Panc1 (cell line): ENCODE measurements at regions of chr10 and their contacts with region 1.

Region 1: GRCh38 chr10:3873728-3874461 is 88.9 kb upstream of the KLF6 start:
- DNase-seq: no peak
- ATAC-seq: no peak
- H3K4me3 ChIP-seq: no peak overlapping the region
- H3K27ac ChIP-seq: peak overlapping the region; percentile 76
- H3K4me1 ChIP-seq: peaks cover 42% of the 10 kb centered on the region
- H3K27me3 ChIP-seq: no peaks in the 10 kb centered on the region
- CTCF ChIP-seq: no peak

Region 2: GRCh38 chr10:3162533-3162932 is 711.4 kb before region 1 on chr10:
- CTCF ChIA-PET with region 1: no interaction called
- POLR2A ChIA-PET with region 1: interaction called, 17 read pairs
- in situ Hi-C with region 1: no loop called
- intact Hi-C with region 1: no loop called
- DNase-seq: no peak
- ATAC-seq: no peak
- H3K4me3 ChIP-seq: no peak overlapping the region
- H3K27ac ChIP-seq: no peak overlapping the region
- H3K4me1 ChIP-seq: no peaks in the 10 kb centered on the region
- H3K27me3 ChIP-seq: no peaks in the 10 kb centered on the region
- CTCF ChIP-seq: peak; percentile 39; the same call in 1 of the 2 replicates

Region 3: GRCh38 chr10:3538658-3539531 is 335.0 kb before region 1 on chr10:
- CTCF ChIA-PET with region 1: no interaction called
- POLR2A ChIA-PET with region 1: no interaction called
- in situ Hi-C with region 1: no loop called
- intact Hi-C with region 1: no loop called
- DNase-seq: no peak
- ATAC-seq: peak; percentile 62; the same call in 1 of the 2 replicates
- H3K4me3 ChIP-seq: no peak overlapping the region
- H3K27ac ChIP-seq: no peak overlapping the region
- H3K4me1 ChIP-seq: no peaks in the 10 kb centered on the region; the same call in 1 of the 2 replicates
- H3K27me3 ChIP-seq: no peaks in the 10 kb centered on the region
- CTCF ChIP-seq: no peak

Region 4: DNA sequence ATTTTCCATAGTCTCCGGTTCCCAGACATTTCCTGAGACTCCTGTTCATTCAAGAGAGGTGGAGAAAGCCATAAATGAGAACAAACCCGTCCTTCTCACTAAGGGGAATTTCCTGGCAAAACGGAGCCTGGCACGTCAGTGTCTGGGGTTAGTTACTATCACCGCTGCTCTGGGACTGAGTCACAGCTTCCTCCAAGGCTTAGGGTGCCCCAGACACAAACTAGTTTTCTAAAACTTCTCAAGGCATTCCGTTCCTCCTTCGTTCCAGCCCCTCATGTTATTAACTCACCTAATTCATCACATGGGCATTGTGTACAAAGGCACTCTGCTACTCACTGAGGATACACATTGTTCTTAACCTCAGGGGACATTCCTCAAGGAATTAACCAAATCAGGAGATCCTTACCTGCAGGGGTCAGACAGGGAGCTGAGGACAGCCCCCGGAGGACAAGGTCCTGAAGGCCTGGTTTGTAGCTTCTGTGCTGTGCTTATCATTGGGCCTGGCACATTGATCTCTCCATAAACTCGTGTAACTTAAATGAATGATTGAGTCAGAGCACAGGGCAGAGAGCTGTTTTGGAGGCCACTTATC is 14.1 kb after region 1 on chr10:
- CTCF ChIA-PET with region 1: no interaction called
- POLR2A ChIA-PET with region 1: interaction called, 17 read pairs
- in situ Hi-C with region 1: no loop called
- intact Hi-C with region 1: no loop called
- DNase-seq: no peak
- ATAC-seq: peak; percentile 68
- H3K4me3 ChIP-seq: no peak overlapping the region
- H3K27ac ChIP-seq: peak overlapping the region; percentile 100
- H3K4me1 ChIP-seq: peaks cover 55% of the 10 kb centered on the region
- H3K27me3 ChIP-seq: no peaks in the 10 kb centered on the region
- CTCF ChIP-seq: no peak

Region 5: DNA sequence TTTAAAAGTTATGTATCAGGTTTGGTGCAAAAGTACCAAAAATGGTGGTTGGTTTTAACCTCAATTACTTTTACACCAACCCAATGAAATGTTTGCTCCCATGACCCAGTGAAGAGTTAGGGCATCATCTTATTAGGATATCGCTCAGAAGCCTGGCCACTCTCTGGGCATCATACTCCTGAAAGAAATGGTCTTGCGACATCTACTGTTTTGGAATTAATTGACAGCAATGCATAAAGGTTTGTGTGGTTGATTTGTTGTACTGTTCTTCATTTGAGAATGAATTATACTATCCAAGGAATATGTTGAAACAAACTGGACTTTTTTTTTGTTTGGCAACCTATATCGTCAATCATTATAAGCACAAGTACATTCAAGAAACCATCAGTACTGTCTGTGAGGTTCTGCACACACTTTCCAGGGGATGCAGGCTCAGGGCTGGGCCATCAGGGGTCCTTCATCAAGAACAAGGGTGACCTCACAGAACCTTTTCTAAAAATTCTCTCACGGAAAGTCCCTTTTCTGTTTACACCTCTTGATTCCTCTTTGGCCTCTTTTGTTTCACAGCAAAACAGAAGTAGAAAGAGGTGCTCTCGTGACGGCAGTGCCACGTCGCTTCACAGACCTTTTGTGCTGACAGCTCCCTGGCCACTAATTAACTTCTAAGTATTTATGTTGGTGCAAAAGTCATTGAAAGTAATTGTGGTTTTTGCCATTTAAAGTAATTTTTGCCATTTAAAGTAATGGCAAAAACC is 28.3 kb after region 1 on chr10:
- CTCF ChIA-PET with region 1: no interaction called
- POLR2A ChIA-PET with region 1: interaction called, 12 read pairs
- in situ Hi-C with region 1: no loop called
- intact Hi-C with region 1: no loop called
- DNase-seq: no peak
- ATAC-seq: peak; percentile 57
- H3K4me3 ChIP-seq: no peak overlapping the region
- H3K27ac ChIP-seq: peak overlapping the region; percentile 99
- H3K4me1 ChIP-seq: peaks cover 44% of the 10 kb centered on the region
- H3K27me3 ChIP-seq: no peaks in the 10 kb centered on the region
- CTCF ChIP-seq: no peak; the same call in 1 of the 2 replicates

Region 6: DNA sequence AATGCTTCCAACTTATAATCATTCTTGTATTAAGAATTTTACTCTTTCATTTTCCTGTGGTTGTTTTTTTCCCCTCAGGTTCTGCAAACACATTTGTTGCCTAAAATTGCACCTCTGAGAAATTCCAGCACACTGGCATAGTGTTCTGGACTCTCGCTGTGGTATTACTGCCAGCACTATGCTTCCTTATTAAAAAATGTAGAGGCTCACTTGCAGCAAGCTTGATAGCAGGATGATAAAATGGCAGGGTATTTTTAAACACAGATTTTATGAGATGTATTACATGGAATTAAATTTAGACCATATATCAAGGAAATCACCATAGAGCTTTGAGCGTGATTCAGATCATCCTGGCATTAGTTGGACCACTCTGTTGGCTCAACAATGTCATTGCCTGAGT is 535.4 kb after region 1 on chr10:
- CTCF ChIA-PET with region 1: no interaction called
- POLR2A ChIA-PET with region 1: no interaction called
- in situ Hi-C with region 1: no loop called
- intact Hi-C with region 1: no loop called
- DNase-seq: no peak
- ATAC-seq: no peak
- H3K4me3 ChIP-seq: no peak overlapping the region
- H3K27ac ChIP-seq: no peak overlapping the region
- H3K4me1 ChIP-seq: no peaks in the 10 kb centered on the region
- H3K27me3 ChIP-seq: no peaks in the 10 kb centered on the region
- CTCF ChIP-seq: no peak

Region 7: DNA sequence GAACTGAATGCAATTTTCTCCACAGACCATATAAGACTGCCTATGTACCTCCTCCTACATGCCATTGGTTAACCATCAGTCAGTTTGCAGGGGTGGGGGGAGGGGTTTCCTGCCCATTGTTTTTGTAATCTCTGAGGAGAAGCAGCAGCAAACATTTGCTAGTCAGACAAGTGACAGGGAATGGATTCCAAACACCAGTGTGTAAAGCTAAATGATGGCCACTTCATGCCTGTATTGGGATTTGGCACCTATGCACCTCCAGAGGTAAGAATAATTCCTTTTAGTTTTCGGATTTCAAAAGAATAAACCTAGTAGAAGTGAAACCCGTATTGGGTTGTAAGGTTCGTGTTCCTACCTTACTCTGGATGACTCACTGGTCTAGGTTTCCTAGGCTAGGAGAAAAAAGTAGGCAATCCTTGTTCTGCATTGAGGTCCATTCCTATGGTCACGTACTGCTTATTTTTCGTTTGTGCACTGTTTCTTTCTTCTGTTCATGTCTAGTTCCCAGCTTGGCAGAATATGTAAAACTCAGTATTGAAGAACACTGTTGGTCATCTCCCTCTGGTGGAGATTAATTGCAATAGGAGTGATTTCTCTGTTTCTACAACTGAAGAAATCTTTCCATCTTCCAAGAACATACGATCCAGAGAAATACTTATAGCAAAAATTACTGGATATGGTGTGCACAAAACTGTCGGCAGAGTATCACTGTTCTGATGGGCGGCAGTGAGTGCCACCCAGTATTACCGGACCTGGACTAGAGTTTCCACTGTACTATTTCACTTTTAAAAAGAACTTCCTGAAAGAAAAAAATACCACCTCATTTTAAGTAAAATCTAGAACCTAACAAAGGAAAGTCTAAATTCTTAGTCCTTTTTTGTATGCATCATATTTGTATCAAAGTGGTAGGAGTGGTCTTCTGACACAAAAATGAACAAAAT is 1220.6 kb after region 1 on chr10 and contains the start of gene AKR1C3:
- CTCF ChIA-PET with region 1: no interaction called
- POLR2A ChIA-PET with region 1: no interaction called
- in situ Hi-C with region 1: no loop called
- intact Hi-C with region 1: no loop called
- DNase-seq: no peak
- ATAC-seq: no peak
- H3K4me3 ChIP-seq: peak within 1 kb of the TSS; percentile 8 to 18; a peak in 1 of 4 replicates
- H3K27ac ChIP-seq: no peak within 1 kb of the TSS
- H3K4me1 ChIP-seq: no peaks in the 10 kb centered on the region
- H3K27me3 ChIP-seq: no peaks in the 10 kb centered on the region
- CTCF ChIP-seq: peak; percentile 45; the same call in 1 of the 2 replicates
- total RNA-seq, gene AKR1C3: 0.62 TPM